ENCODE measurements at regions of chr2 and their contacts with region 1.

Region 1: DNA sequence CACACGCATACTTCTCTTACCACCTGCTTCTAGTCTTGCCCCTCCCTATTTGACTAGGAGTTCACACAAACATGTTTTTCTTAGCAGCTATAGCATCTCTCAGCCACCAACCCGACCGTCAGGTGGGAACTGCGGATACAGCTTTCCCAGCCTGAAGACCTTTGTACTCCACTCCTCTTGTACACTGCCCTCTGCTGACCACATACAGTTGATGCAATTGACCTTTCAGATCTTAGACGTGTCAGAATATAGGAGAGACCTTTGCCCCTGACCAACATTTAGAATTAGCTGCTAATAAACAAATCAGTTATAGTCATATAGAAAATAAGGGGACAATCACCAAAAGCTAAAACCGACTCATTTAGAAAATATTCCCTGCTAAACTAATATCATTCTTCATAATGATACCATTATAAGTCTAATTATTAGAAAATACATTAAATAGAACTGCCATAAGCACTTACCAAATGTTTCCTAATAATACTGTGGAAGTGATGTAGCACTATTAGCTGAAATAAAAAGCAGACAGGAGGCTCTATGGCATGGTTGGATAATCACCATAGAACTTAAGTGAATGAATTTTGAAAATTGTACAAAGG is 208.4 kb downstream of the RAD51AP2 start:
- DNase-seq: peak; percentile 64
- H3K4me3 Mint-ChIP-seq: no peak overlapping the region
- H3K27ac Mint-ChIP-seq: no peak overlapping the region
- H3K4me1 Mint-ChIP-seq: no peaks in the 10 kb centered on the region
- H3K27me3 Mint-ChIP-seq: peaks cover 20% of the 10 kb centered on the region
- CTCF ChIP-seq: peak; percentile 48

Region 2: DNA sequence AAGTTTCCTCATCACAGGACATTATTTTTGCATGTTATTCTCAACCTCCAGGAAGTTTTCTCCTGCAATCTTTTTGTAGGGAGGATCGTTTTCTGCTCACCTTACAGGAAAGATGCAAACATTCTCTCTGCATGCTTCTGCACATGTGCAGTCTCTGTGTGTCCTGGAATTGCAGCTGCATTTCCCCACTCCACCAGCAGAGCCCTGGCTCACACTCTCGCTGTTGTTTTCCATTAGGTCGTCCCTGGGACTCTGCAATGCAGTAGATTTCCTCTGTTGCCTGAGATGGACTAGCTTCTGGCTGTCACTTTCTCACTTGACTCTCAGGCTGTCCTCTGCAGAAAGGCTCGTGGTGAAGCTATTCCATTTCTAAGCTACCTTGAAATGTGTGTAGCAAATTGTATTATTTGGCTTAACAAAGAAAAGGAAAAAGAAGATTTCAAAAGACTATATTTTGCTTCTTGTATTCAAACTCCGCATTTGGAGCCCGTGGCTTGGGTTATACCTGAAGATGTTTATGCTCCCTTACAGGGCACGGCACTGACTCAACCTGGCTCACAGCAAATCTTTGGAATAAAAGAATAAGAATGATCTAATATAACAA is 138.3 kb before region 1 on chr2:
- CTCF ChIA-PET with region 1: no interaction called
- intact Hi-C with region 1: loop called (anchors 1 kb)
- DNase-seq: peak; percentile 6
- H3K4me3 Mint-ChIP-seq: no peak overlapping the region
- H3K27ac Mint-ChIP-seq: no peak overlapping the region
- H3K4me1 Mint-ChIP-seq: no peaks in the 10 kb centered on the region
- H3K27me3 Mint-ChIP-seq: no peaks in the 10 kb centered on the region
- CTCF ChIP-seq: peak; percentile 39

Region 3: DNA sequence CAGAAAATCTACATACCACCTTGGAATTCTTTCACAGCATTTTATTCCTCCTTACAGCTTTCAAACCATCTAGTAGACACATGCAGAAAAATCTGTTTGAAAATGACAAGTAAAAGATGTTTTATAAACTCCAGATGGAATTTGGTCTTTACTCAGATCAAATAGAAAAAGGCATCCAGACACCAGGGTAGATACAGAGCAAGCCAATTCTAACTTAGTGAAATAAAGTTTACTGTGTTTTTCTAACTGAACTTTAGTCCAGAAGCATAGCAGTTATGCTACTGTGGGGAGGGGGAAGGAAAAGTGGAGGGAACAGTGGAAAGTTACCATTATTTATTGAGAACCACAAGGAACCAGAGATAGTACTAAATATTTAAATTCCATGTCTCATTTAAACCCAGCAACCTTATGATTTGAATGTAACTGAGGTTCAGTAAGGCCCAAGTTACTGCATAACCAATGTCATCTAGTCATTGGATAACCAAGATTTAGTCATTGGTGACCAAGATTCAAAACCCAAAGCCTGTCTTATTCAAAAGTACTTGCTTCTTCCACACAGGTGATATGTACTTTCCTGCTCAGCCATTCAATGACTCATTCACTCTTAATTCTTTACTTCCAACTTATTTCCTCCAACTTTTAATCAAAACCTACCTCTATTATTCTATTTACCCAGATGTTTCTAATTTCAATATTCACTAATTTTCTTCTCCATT is 150.7 kb after region 1 on chr2:
- CTCF ChIA-PET with region 1: no interaction called
- intact Hi-C with region 1: no loop called
- DNase-seq: no peak
- H3K4me3 Mint-ChIP-seq: no peak overlapping the region
- H3K27ac Mint-ChIP-seq: no peak overlapping the region
- H3K4me1 Mint-ChIP-seq: no peaks in the 10 kb centered on the region
- H3K27me3 Mint-ChIP-seq: no peaks in the 10 kb centered on the region
- CTCF ChIP-seq: no peak

Region 4: GRCh38 chr2:17719562-17720371 is 409.9 kb after region 1 on chr2:
- CTCF ChIA-PET with region 1: no interaction called
- intact Hi-C with region 1: no loop called
- DNase-seq: no peak
- H3K4me3 Mint-ChIP-seq: no peak overlapping the region
- H3K27ac Mint-ChIP-seq: no peak overlapping the region
- H3K4me1 Mint-ChIP-seq: no peaks in the 10 kb centered on the region
- H3K27me3 Mint-ChIP-seq: no peaks in the 10 kb centered on the region
- CTCF ChIP-seq: peak; percentile 57